ENCODE measurements at regions of chr1 and their contacts with region 1.

Region 1: GRCh38 chr1:214764537-214764936 is 161.5 kb downstream of the CENPF start:
- DNase-seq: peak; percentile 38

Region 2: DNA sequence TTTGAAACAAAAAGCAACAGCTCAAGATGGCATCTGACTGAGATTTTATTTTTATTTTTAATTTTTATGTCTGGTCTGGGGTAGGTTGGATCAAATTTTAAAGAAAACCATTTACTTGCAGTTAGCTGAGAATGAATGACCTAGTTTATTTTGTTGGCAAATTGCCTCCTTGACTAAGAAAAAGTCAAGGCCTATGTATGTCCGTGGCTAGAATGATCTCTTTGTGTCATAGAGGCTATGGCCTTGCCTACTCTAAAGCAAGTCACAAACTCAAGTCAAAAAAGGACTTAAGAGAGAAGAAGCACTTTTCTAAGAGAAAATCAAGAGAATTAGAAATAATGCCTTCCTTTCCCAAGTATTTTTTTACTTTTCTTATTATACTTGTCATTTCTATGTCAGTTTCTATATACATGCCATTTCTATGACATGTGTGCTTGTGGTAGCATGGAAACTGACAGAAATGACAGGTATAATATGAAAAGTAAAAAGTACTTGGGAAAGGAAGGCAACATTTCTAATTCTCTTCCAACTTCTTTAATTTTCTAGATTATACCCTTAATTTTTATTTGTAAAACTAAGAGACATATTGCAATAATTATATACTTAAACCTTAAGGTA is 24.8 kb before region 1 on chr1:
- intact Hi-C with region 1: loop called in 1 of 2 experiments (anchors 1 kb)
- DNase-seq: no peak

Region 3: GRCh38 chr1:214747050-214747615 is 17.4 kb before region 1 on chr1:
- intact Hi-C with region 1: loop called in 1 of 2 experiments (anchors 1 kb)
- DNase-seq: no peak

Measured in posterior vena cava (tissue), 2 donors.